Common myeloid progenitor, CD34-positive (primary cell): ENCODE measurements at regions of chr7 and their contacts with region 1.

Region 1: DNA sequence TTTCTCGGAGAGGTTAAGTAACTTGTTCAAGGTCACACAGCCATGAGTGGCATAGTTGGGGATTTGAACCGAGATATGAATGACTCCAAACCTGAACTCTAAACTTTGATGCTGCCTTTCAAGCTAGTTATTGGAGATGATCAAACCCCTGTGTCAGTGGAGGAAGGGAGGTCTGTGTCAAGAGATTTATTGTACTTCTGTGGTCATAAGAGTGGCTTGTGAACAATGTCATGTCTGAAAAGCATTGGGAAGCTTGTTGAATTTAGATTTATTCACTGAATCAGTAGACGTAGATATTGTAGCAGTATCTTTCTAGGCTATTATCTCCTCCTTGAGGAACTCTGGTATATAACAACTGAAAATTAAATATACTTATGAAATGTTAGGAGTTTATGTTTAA is 27.3 kb downstream of the SNX10 start:
- DNase-seq: peak in 2 of 3 donors; percentile 22 to 43
- H3K4me3 ChIP-seq: no peak overlapping the region
- H3K27ac ChIP-seq: no peak overlapping the region
- H3K4me1 ChIP-seq: peaks cover 7 to 26% (median 11%) of the 10 kb centered on the region in 4 experiments
- H3K27me3 ChIP-seq: no peaks in the 10 kb centered on the region

Region 2: DNA sequence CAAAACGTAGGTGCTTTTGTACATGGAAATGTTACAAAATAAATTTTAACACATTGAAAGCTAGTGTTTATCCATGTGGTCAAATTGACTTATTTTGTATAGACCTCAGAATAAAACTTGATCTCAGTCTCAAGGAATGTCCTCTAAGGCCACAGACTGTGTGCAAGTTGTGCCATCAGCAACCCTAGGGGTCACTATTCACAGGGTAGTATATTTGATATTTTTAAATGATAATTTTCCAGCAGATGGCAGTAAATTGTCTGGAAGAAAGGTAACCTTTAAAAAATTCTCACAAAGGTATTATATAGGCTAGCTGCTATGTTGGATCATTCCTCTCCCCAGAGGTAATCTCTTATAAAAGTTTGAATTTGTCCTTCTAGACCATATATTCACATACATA is 40.2 kb before region 1 on chr7:
- CTCF ChIA-PET with region 1: interaction called, 27 read pairs
- POLR2A ChIA-PET with region 1: no interaction called
- DNase-seq: peak; percentile 60 to 66 (median 64)
- H3K4me3 ChIP-seq: peak overlapping the region in 3 of 7 experiments; percentile 11 to 70 (median 48)
- H3K27ac ChIP-seq: no peak overlapping the region
- H3K4me1 ChIP-seq: peaks cover 0 to 4% (median 2%) of the 10 kb centered on the region in 4 experiments
- H3K27me3 ChIP-seq: no peaks in the 10 kb centered on the region

Region 3: GRCh38 chr7:26305463-26306273 is 13.3 kb before region 1 on chr7:
- CTCF ChIA-PET with region 1: interaction called, 21 read pairs
- POLR2A ChIA-PET with region 1: no interaction called
- DNase-seq: peak; percentile 61 to 86 (median 81)
- H3K4me3 ChIP-seq: peak overlapping the region in 6 of 7 experiments; percentile 17 to 66 (median 49)
- H3K27ac ChIP-seq: peak overlapping the region; percentile 1 to 65
- H3K4me1 ChIP-seq: peaks cover 19 to 53% (median 37%) of the 10 kb centered on the region in 4 experiments
- H3K27me3 ChIP-seq: no peaks in the 10 kb centered on the region

Region 4: GRCh38 chr7:26329520-26330255 is 10.8 kb after region 1 on chr7:
- CTCF ChIA-PET with region 1: interaction called, 12 read pairs
- POLR2A ChIA-PET with region 1: no interaction called
- DNase-seq: peak in 2 of 3 donors; percentile 33 to 54
- H3K4me3 ChIP-seq: peak overlapping the region in 1 of 7 experiments; percentile 42
- H3K27ac ChIP-seq: no peak overlapping the region
- H3K4me1 ChIP-seq: peaks cover 7 to 45% (median 28%) of the 10 kb centered on the region in 4 experiments
- H3K27me3 ChIP-seq: no peaks in the 10 kb centered on the region